Posterior cingulate gyrus (tissue), 11 donors: ENCODE measurements at regions of chr13 and their contacts with region 1.

Region 1: DNA sequence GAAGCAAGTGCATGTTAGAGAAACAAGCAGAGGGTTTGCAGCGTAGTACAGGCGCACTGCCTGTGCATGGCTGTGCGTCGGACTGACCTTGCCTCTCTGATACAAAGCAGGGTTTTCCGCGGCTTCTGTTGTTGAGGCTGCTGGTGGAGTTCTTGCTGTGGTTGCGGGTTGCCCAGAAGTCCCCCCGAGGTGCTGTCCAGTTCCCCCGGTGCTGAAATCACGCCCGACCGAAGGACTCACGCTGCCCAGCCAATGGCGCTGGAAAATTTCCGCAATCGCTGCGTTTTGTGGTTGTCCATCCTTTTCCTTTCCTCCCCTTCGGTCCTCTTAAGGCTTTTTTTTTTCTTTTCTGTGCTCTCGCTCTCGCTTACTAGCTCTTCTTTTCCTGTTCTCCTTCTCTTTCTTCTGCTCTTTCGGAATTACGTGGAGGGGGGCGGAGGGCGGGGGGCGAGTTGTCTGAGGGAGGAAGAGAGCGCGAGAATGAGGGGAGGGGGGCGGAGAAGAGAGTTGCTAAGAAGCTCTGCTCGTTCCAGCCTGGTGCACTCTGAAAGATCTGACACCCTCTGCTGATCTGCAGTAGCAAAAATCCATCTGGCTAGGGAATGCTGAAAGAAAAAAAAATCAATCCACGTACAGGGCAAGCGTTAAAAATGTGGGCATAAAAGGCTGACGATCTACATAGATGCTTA is at the start of gene SLITRK1:
- DNase-seq: peak; percentile 63 to 96 (median 84)

Region 2: GRCh38 chr13:83634601-83635000 is 247.5 kb before region 1 on chr13:
- intact Hi-C with region 1: loop called (anchors 5 kb)
- DNase-seq: peak in 1 of 10 donors; percentile 28

Region 3: GRCh38 chr13:83765796-83766195 is 116.3 kb before region 1 on chr13:
- intact Hi-C with region 1: loop called (anchors 5 kb)
- DNase-seq: peak in 1 of 10 donors; percentile 40

Region 4: GRCh38 chr13:83825676-83826075 is 56.4 kb before region 1 on chr13:
- intact Hi-C with region 1: loop called (anchors 10 kb)
- DNase-seq: peak in 6 of 10 donors; percentile 26 to 82 (median 44)